A549 (cell line): ENCODE measurements at regions of chr17 and their contacts with region 1.

Region 1: DNA sequence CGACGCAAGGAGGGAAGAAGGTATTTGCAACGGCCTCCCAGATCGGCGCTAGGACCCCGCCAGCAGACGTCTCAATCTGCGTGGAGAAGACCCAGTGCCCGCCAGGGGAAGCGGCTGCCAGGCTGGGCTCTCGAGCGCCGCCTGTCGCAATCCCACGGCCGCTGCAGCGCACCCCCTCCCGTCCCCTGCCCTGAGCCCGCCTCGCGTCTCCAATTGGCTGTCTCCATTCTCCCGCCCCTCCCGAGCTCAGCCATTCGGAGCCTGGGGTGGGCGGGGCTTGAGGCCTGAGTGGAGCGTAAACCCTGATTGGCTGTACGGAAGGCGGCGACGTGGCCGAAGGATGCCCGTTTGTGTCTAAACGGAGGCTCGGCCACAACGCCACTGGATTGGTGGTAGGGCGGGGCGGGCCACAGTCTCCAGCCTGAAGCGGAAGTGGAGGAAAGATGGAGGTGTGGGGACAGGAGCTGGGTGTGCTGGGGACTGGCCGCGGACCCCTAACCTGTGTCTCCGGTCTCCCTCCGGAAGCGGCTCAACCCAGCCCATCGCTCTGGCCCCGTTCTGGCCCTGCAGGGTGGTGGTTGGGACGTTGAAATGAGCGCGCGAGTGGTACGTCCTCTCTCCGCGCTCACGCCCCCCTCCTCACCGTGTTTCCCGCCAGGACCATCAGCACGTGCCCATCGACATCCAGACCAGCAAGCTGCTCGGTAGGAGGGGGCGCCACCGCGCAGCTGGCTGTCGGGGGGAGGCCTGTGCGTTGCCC is at the start of gene CDK5RAP3:
- DNase-seq: peak; percentile 96 to 100
- ATAC-seq: peak; percentile 96 to 97
- H3K4me3 ChIP-seq: peak within 1 kb of the TSS; percentile 77
- H3K27ac ChIP-seq: peak within 1 kb of the TSS; percentile 85 to 90
- H3K4me1 ChIP-seq: peaks cover 47% of the 10 kb centered on the region
- CTCF ChIP-seq: peak; percentile 92
- EP300 ChIP-seq: no peak
- POLR2A ChIP-seq: peak; percentile 88
- RAD21 ChIP-seq: peak; percentile 74 to 89
- polyA plus RNA-seq, gene CDK5RAP3: 124 and 179 TPM in 2 replicates

Region 2: DNA sequence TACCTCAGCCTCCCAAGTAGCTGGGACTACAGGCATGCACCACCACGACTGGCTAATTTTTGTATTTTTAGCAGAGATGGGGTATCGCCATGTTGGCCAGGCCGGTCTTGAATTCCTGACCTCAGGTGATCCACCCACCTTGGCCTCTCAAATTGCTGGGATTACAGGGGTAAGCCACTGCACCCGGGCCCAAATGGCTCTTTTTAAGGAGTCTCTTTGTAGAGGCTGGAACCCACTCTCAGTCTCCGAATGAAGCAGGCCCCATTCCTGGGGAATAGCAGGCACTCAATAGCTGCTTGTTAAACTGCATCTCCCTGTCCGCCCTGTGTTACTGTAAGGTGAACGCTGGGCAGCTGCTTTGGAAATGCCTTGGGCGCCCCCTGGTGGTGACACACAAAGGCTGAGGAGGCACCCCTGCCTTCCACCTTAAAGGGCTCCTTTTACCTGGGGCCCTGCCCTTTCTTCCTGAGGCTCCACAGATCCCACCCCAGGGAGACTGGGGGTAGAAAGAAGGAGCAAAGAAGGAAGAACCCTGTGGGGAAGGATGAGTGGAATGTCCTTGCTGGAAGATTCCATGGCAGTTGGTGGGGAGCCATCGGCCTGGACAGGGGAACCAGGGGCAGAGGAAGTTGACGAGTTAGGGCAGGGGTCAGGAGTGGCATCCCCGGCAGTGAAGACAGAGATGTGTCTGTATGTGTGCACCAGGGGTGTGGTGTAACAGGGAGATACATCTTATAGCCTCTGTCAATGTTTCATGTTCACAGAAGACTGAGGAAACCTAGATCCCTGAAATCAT is 81.0 kb before region 1 on chr17:
- CTCF ChIA-PET with region 1: interaction called, 87 read pairs
- POLR2A ChIA-PET with region 1: interaction called, 29 read pairs
- DNase-seq: peak; percentile 85 to 90
- ATAC-seq: peak; percentile 95 to 98
- H3K4me3 ChIP-seq: no peak overlapping the region
- H3K27ac ChIP-seq: no peak overlapping the region
- H3K4me1 ChIP-seq: peaks cover 23% of the 10 kb centered on the region; the same call in 2 of the 3 replicates
- CTCF ChIP-seq: peak; percentile 99
- EP300 ChIP-seq: no peak
- POLR2A ChIP-seq: no peak
- RAD21 ChIP-seq: peak; percentile 100

Region 3: GRCh38 chr17:47935961-47936360 is 34.9 kb before region 1 on chr17:
- CTCF ChIA-PET with region 1: interaction called, 1,426 read pairs
- POLR2A ChIA-PET with region 1: interaction called, 8 read pairs
- DNase-seq: peak; percentile 75 to 81
- ATAC-seq: peak; percentile 74 to 82
- H3K4me3 ChIP-seq: no peak overlapping the region
- H3K27ac ChIP-seq: peak overlapping the region; percentile 37 to 72; a peak in 5 of 6 replicates
- H3K4me1 ChIP-seq: peaks cover 29% of the 10 kb centered on the region
- CTCF ChIP-seq: no peak
- EP300 ChIP-seq: no peak
- POLR2A ChIP-seq: no peak
- RAD21 ChIP-seq: no peak

Region 4: GRCh38 chr17:47949136-47949759 is 21.6 kb before region 1 on chr17:
- CTCF ChIA-PET with region 1: interaction called, 1,426 read pairs
- POLR2A ChIA-PET with region 1: interaction called, 10 read pairs
- DNase-seq: peak; percentile 80 to 85
- ATAC-seq: peak; percentile 71 to 88
- H3K4me3 ChIP-seq: peak overlapping the region; percentile 5; the same call in 1 of the 3 replicates
- H3K27ac ChIP-seq: peak overlapping the region; percentile 77 to 87
- H3K4me1 ChIP-seq: peaks cover 48% of the 10 kb centered on the region
- CTCF ChIP-seq: peak; percentile 99
- EP300 ChIP-seq: no peak
- POLR2A ChIP-seq: no peak
- RAD21 ChIP-seq: peak; percentile 96 to 97

Region 5: DNA sequence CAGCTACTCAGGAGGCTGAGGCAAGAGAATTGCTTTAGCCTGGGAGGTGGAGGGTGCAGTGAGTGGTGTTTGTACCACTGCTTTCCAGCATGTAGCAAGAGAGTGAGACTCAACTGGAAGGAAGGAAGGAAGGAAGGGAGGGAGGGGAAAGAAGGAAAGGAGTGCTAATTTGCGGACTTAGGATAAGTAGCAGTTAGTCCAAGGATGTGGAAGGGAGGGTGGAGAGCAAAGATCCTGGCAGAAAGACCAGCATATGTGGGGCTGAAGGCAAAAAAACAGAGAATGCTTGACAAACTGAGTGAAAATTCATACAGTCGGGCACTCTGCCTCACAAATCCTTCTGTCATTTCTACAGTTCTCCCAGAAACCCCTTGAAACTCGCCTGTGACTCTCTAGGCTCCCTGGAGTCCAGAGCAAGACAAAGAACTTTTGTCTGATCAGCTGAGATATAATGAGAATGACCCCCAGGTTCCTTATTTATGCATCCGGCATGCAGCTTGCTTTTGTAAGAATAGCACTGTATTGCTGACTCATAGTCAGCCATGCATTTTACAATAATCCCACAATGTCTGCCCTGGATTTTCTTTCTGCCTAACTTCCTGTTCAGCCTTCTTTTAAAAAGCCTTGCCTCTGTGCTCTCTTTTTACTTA is 31.5 kb after region 1 on chr17:
- CTCF ChIA-PET with region 1: interaction called, 766 read pairs
- POLR2A ChIA-PET with region 1: interaction called, 4 read pairs
- DNase-seq: peak; percentile 36 to 56
- ATAC-seq: peak in 1 of 2 experiments; percentile 64; a peak in 3 of 6 replicates
- H3K4me3 ChIP-seq: no peak overlapping the region
- H3K27ac ChIP-seq: peak overlapping the region; percentile 75 to 84
- H3K4me1 ChIP-seq: peaks cover 16% of the 10 kb centered on the region
- CTCF ChIP-seq: no peak
- EP300 ChIP-seq: no peak
- POLR2A ChIP-seq: no peak
- RAD21 ChIP-seq: no peak